Psoas muscle (tissue), 8 donors: ENCODE measurements at regions of chr1 and their contacts with region 1.

Region 1: DNA sequence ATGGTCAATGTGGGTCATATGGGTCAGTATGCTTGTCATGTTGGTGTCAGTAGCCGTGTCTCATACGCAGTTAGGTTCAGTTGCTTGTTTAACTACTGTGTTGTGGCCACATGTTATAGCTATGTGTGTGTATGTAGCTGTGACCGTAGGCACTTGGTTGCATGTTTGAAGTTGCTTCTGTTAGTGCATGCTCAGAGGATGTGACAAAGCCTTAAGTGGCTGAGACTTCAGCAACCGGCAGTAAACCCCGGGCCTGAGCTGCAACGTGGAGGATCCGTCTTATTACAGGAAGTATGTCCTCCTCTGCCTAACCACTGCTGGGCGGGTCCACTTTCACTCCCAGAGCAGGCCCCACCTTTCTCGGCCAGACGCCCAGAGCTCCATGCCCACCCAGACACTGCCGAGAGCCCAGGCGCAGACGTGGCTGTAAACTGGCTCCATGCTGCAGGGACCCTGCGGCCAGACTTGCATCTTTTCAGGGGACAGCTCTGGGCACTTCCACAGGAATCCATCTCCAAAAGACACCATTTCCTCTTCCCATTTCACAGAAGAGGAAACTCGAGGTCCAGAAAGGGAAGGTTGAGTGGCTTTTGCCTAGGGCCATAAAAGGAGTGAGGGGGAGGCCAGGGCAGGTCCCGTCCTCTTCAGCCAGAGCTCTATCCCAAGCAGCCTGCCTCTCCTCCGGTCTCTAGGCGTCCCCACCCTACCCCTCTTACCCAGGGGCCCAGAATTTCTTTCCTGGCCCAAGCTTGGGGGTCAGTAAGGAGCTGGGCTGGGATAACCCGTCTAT is 2.1 kb downstream of the TCEA3 start:
- DNase-seq: peak; percentile 73 to 80
- ATAC-seq: peak in 3 of 4 donors; percentile 2 to 21 (median 21)
- H3K4me3 ChIP-seq: peak overlapping the region; percentile 75
- H3K27ac ChIP-seq: peak overlapping the region; percentile 92
- H3K4me1 ChIP-seq: peaks cover 48% of the 10 kb centered on the region
- H3K27me3 ChIP-seq: no peaks in the 10 kb centered on the region
- CTCF ChIP-seq: no peak

Region 2: GRCh38 chr1:23478896-23479665 is 56.6 kb after region 1 on chr1:
- intact Hi-C with region 1: loop called in 1 of 2 experiments (anchors 5 kb)
- DNase-seq: peak; percentile 90 to 96
- ATAC-seq: peak; percentile 90 to 95 (median 90)
- H3K4me3 ChIP-seq: peak overlapping the region; percentile 27
- H3K27ac ChIP-seq: peak overlapping the region; percentile 87
- H3K4me1 ChIP-seq: peaks cover 64% of the 10 kb centered on the region
- H3K27me3 ChIP-seq: no peaks in the 10 kb centered on the region
- CTCF ChIP-seq: peak; percentile 6

Region 3: GRCh38 chr1:23530747-23531561 is 108.5 kb after region 1 on chr1 and contains the start of gene E2F2:
- intact Hi-C with region 1: loop called in 1 of 2 experiments (anchors 5 kb)
- DNase-seq: peak; percentile 85 to 93
- ATAC-seq: peak; percentile 88 to 94 (median 89)
- H3K4me3 ChIP-seq: peak within 1 kb of the TSS; percentile 71
- H3K27ac ChIP-seq: peak within 1 kb of the TSS; percentile 57
- H3K4me1 ChIP-seq: peaks cover 34% of the 10 kb centered on the region
- H3K27me3 ChIP-seq: no peaks in the 10 kb centered on the region
- CTCF ChIP-seq: no peak
- total RNA-seq, gene E2F2: 0.06 to 0.32 (median 0.17) TPM in 3 of 4 donors, not detected in the other